OCI-LY7 (cell line): ENCODE measurements at regions of chr4 and their contacts with region 1.

Region 1: DNA sequence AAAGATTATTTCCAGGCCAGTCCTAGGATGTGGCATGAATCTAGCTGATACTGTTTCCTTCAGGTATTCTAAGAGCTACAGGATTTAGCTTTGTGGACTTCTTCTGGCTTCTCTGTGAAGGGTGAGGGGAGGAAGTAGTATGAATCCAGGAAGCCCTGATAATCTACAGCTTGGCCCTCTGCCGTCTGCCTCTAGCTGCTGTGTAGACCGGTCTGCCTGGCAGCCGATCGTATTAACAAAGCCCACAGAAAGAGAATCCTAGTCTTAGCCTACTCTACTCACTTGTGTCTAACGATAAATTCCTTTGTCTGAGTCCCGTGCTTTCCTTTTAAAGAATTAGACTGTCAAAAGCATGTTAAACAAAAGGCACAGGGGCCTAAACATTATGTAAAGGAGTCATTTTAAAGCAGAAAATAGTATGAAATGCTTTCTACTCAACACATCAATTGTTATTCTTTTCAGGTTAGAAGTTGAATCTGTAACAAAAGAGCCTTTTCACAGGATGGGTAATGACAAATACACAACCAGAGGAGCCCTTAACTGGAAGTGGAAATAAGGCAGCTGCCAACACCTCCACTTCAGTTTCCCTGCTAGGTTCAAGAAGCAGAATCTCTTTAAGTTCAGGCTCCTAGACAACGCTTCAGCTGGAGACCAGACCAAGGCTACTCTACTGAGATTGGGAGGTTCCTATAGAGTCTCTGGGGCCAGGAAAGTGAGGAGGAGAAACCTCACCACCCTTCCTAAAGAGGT is 48.9 kb upstream of the UCP1 start:
- DNase-seq: no peak
- H3K4me3 ChIP-seq: no peak overlapping the region
- H3K27ac ChIP-seq: peak overlapping the region; percentile 22
- H3K4me1 ChIP-seq: peaks cover 79% of the 10 kb centered on the region
- CTCF ChIP-seq: no peak

Region 2: GRCh38 chr4:140233791-140234696 is 383.6 kb before region 1 on chr4:
- CTCF ChIA-PET with region 1: no interaction called
- POLR2A ChIA-PET with region 1: no interaction called
- intact Hi-C with region 1: no loop called
- DNase-seq: no peak
- H3K4me3 ChIP-seq: no peak overlapping the region
- H3K27ac ChIP-seq: no peak overlapping the region
- H3K4me1 ChIP-seq: peaks cover 6% of the 10 kb centered on the region
- CTCF ChIP-seq: no peak

Region 3: DNA sequence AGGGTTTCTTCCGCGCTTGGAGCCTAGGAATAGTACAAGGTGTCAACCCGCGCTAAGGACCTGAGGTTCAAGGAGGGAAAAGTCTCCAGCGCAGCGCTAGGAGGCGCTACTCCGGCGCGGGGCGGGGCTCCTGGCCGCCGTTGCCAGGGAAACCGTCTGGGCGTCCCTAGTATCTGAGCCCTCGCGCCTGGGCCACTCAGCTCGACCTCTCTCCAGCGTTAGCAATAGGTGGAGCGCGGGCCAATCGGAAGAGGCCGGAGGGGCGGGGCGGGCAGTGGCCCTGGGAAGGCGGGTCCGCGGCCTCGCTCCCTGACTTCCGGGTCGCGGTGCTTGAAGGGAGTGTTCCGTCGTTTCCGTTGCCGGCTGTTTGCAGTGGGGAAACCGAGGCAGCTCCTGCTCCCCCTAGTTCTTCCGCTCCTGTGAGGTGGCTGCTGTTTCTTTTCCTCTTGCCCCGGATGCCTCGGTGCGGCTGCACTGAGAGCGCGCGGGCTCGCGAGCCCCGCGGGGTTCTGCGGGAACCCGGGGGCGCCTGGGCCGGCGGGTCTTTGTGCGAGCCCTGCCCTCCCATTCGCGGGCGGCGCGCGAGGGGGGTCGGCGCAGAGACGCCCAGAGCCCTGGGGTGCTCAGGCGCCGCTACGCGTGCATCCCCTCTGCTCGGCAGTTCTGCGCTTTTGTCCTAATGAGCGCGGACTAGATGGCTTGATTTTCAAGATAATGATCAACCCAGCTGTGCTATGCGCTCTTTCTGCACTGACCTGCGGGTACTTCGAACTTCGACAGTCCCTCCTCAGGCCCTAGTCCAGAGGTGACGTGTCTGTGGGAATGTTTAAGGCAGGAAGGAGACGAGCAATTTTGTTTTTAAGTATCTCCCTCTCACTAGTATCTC is 93.6 kb before region 1 on chr4 and contains the start of gene ELMOD2:
- CTCF ChIA-PET with region 1: no interaction called
- POLR2A ChIA-PET with region 1: no interaction called
- intact Hi-C with region 1: loop called (anchors 1 kb)
- DNase-seq: peak; percentile 99
- H3K4me3 ChIP-seq: peak within 1 kb of the TSS; percentile 80
- H3K27ac ChIP-seq: peak within 1 kb of the TSS; percentile 42
- H3K4me1 ChIP-seq: peaks cover 18% of the 10 kb centered on the region
- CTCF ChIP-seq: peak; percentile 95
- total RNA-seq, gene ELMOD2: 16.2 and 20.0 TPM in 2 replicates

Region 4: GRCh38 chr4:140603278-140603677 is 14.4 kb before region 1 on chr4:
- CTCF ChIA-PET with region 1: interaction called, 9 read pairs
- POLR2A ChIA-PET with region 1: interaction called, 37 read pairs
- intact Hi-C with region 1: no loop called
- DNase-seq: no peak
- H3K4me3 ChIP-seq: no peak overlapping the region
- H3K27ac ChIP-seq: no peak overlapping the region
- H3K4me1 ChIP-seq: peaks cover 8% of the 10 kb centered on the region
- CTCF ChIP-seq: no peak

Region 5: GRCh38 chr4:140686796-140687195 is 69.1 kb after region 1 on chr4:
- CTCF ChIA-PET with region 1: no interaction called
- POLR2A ChIA-PET with region 1: no interaction called
- intact Hi-C with region 1: no loop called
- DNase-seq: no peak
- H3K4me3 ChIP-seq: no peak overlapping the region
- H3K27ac ChIP-seq: no peak overlapping the region
- H3K4me1 ChIP-seq: no peaks in the 10 kb centered on the region
- CTCF ChIP-seq: no peak

Region 6: DNA sequence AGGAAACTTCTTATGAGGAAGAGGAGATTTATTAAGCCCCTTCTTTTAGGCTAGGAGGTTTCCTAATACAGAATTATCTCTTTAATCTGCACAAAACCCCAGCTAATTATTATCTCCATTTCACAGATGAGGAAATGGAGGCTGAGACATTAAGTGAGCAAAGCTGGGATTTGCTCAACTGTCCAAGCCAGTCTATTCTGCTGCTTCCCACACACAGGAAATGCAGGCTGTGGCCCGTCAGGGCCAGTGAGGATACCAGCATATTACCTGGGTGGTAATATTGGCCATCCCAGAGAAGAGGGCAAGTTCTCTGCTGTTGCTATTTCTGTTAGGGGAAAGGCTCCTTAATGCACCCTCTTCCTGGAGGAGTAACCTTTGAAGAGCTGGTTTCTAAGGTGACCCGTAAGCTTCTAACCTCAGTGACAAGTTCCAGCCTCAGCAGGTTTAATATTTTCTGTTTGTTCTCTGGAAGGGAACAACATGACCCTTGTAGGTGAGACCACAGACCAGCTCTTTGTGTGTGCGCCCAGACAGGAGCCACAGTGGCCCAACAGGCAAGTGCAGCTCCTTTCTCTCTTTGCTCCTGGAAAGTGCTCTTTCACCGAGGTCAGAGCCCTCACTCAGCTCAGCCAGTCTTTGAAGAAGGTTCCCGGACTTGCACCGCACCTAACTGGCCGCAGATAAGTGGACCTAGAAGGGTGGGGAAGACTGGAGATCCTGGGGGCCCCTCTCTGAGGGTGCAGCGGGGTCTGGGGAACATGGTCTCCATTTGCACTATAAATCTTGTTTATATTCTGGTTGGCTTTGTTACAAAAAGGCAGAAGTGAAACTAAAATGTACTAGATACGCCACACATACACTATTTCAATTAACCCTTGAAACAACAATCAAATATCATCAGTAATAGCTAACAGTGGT is 103.0 kb after region 1 on chr4:
- CTCF ChIA-PET with region 1: no interaction called
- POLR2A ChIA-PET with region 1: interaction called, 13 read pairs
- intact Hi-C with region 1: loop called (anchors 5 kb)
- DNase-seq: peak; percentile 76
- H3K4me3 ChIP-seq: peak overlapping the region; percentile 65
- H3K27ac ChIP-seq: peak overlapping the region; percentile 70
- H3K4me1 ChIP-seq: peaks cover 57% of the 10 kb centered on the region
- CTCF ChIP-seq: no peak

Region 7: DNA sequence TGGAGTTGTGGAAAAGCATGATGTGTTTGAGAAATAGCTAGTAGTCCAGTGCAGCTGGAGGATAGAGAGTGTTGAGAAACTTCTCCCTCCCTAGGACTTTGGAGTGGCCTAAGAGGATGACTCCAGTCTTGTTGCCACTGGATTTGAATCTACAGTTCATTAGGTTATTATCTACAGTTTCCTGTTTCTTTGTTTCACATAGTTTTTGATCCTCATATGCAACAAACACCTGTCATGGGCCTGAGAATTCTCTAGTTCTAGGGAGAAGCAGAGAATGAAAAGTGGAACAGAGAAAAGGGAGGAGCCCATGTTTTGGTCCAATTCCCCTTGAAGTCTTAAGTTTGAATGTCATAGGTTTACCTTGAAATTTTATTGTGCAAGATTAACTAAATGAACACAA is 212.2 kb after region 1 on chr4:
- CTCF ChIA-PET with region 1: no interaction called
- POLR2A ChIA-PET with region 1: interaction called, 10 read pairs
- intact Hi-C with region 1: no loop called
- DNase-seq: peak; percentile 86
- H3K4me3 ChIP-seq: peak overlapping the region; percentile 42
- H3K27ac ChIP-seq: peak overlapping the region; percentile 88
- H3K4me1 ChIP-seq: peaks cover 68% of the 10 kb centered on the region
- CTCF ChIP-seq: no peak